ENCODE measurements at regions of chr12 and their contacts with region 1.

Region 1: GRCh38 chr12:68686595-68687521 is at the start of gene NUP107:
- DNase-seq: peak; percentile 99
- ATAC-seq: peak; percentile 96
- H3K4me3 ChIP-seq: peak within 1 kb of the TSS; percentile 66
- H3K27ac ChIP-seq: peak within 1 kb of the TSS; percentile 45
- H3K4me1 ChIP-seq: no peaks in the 10 kb centered on the region; the same call in 1 of the 2 replicates
- H3K27me3 ChIP-seq: no peaks in the 10 kb centered on the region
- CTCF ChIP-seq: peak; percentile 36; the same call in 1 of the 2 replicates
- POLR2A ChIP-seq: peak; percentile 66
- RAD21 ChIP-seq: 0 out of 2 replicates have a peak, but pooled peaks have one; percentile 23
- total RNA-seq, gene NUP107: 54.4 and 69.7 TPM in 2 replicates

Region 2: DNA sequence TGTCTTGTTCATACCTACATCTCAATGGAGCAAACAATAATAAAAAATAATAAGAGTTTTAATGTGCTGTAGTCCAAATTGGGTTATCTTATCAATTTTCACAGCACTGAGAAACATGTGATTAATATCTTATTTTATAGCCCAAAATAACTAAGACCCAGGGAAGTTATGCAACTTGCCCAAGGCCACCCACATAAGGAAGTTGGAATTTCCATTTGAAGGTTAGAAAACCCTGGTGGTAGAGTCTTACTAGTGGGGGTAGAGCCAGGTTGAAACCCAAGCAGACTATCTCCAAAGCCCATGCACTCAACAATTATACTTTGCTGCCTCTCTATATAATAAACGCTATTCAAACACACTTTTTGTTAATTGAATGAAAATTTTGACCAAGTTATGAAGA is 1687.7 kb before region 1 on chr12:
- CTCF ChIA-PET with region 1: no interaction called
- POLR2A ChIA-PET with region 1: no interaction called
- dilution Hi-C with region 1: no loop called
- in situ Hi-C with region 1: no loop called
- intact Hi-C with region 1: no loop called
- DNase-seq: no peak
- ATAC-seq: no peak
- H3K4me3 ChIP-seq: no peak overlapping the region
- H3K27ac ChIP-seq: no peak overlapping the region
- H3K4me1 ChIP-seq: no peaks in the 10 kb centered on the region
- H3K27me3 ChIP-seq: no peaks in the 10 kb centered on the region
- CTCF ChIP-seq: no peak
- POLR2A ChIP-seq: no peak
- RAD21 ChIP-seq: no peak

Region 3: GRCh38 chr12:68331869-68332727 is 354.8 kb before region 1 on chr12 and contains the start of gene MDM1:
- CTCF ChIA-PET with region 1: no interaction called
- POLR2A ChIA-PET with region 1: no interaction called
- dilution Hi-C with region 1: no loop called
- in situ Hi-C with region 1: no loop called
- intact Hi-C with region 1: loop called (anchors 1 kb)
- DNase-seq: peak; percentile 98
- ATAC-seq: peak; percentile 100
- H3K4me3 ChIP-seq: peak within 1 kb of the TSS; percentile 81
- H3K27ac ChIP-seq: peak within 1 kb of the TSS; percentile 62
- H3K4me1 ChIP-seq: peaks cover 2% of the 10 kb centered on the region; the same call in 1 of the 2 replicates
- H3K27me3 ChIP-seq: no peaks in the 10 kb centered on the region; the same call in 1 of the 2 replicates
- CTCF ChIP-seq: no peak
- POLR2A ChIP-seq: no peak
- RAD21 ChIP-seq: no peak
- total RNA-seq, gene MDM1: 5.6 and 7.8 TPM in 2 replicates

Region 4: GRCh38 chr12:68358532-68359485 is 328.0 kb before region 1 on chr12:
- CTCF ChIA-PET with region 1: no interaction called
- POLR2A ChIA-PET with region 1: no interaction called
- dilution Hi-C with region 1: no loop called
- in situ Hi-C with region 1: loop called (anchors 25 kb)
- intact Hi-C with region 1: loop called (anchors 2 kb)
- DNase-seq: peak; percentile 82
- ATAC-seq: peak; percentile 93
- H3K4me3 ChIP-seq: no peak overlapping the region
- H3K27ac ChIP-seq: no peak overlapping the region
- H3K4me1 ChIP-seq: peaks cover 9% of the 10 kb centered on the region
- H3K27me3 ChIP-seq: no peaks in the 10 kb centered on the region
- CTCF ChIP-seq: peak; percentile 75
- POLR2A ChIP-seq: no peak
- RAD21 ChIP-seq: peak; percentile 76

Region 5: GRCh38 chr12:68406134-68406594 is 280.7 kb before region 1 on chr12:
- CTCF ChIA-PET with region 1: no interaction called
- POLR2A ChIA-PET with region 1: interaction called, 11 read pairs
- dilution Hi-C with region 1: no loop called
- in situ Hi-C with region 1: no loop called
- intact Hi-C with region 1: no loop called
- DNase-seq: peak; percentile 82
- ATAC-seq: peak; percentile 91
- H3K4me3 ChIP-seq: no peak overlapping the region
- H3K27ac ChIP-seq: no peak overlapping the region; the same call in 1 of the 2 replicates
- H3K4me1 ChIP-seq: peaks cover 5% of the 10 kb centered on the region
- H3K27me3 ChIP-seq: no peaks in the 10 kb centered on the region
- CTCF ChIP-seq: peak; percentile 41
- POLR2A ChIP-seq: no peak
- RAD21 ChIP-seq: peak; percentile 44